ENCODE measurements at regions of chr4 and their contacts with region 1.

Region 1: DNA sequence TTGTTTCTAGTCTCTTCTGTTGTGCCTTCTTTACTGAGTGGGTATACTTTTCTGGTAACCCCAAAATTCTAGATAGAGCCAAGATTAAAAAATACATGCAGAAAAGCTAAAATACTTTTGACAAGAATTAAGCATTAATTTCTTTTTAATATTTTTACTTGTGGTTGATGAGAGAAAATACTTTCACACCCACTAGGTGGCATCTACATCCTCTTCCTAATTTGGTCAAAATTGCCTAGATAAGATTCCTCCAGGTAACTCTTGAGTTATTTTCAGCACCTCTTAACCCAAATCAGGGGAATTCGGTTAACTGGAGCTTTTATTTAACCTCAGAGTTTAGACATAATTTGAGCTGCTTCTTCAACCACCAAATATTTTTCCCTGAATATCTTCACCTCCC is 28.4 kb upstream of the COX7B2 start:
- DNase-seq: no peak
- H3K4me3 ChIP-seq: no peak overlapping the region
- H3K27ac ChIP-seq: no peak overlapping the region
- H3K27me3 ChIP-seq: no peaks in the 10 kb centered on the region
- CTCF ChIP-seq: peak; percentile 43

Region 2: DNA sequence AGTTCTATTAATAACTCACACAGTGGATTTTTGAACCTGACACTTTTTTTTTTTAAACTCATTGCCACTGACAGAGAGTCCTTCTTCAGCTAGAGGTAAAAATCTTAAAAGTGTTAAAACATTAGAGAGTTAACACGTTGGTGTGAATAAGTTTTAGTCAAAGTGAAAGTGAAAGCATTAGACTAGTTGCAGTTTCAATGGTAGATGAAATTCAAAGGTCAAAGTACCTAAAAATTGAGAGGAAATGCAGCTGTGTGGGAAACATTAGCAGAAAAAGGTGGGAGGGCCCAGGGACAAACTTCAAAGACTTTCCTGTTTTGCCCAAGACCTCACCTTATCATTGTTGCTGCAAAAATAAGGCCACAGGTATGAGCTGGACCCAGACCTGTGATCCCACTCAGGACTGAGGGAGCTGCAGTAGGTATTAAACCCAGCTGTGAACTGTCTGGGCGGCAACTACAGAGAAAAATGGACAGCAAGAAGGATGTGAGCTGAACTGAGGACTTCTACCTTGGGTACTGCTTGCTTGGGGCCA is 73.5 kb after region 1 on chr4:
- CTCF ChIA-PET with region 1: no interaction called
- POLR2A ChIA-PET with region 1: no interaction called
- DNase-seq: no peak
- H3K4me3 ChIP-seq: no peak overlapping the region
- H3K27ac ChIP-seq: no peak overlapping the region
- H3K27me3 ChIP-seq: no peaks in the 10 kb centered on the region
- CTCF ChIP-seq: no peak

Region 3: DNA sequence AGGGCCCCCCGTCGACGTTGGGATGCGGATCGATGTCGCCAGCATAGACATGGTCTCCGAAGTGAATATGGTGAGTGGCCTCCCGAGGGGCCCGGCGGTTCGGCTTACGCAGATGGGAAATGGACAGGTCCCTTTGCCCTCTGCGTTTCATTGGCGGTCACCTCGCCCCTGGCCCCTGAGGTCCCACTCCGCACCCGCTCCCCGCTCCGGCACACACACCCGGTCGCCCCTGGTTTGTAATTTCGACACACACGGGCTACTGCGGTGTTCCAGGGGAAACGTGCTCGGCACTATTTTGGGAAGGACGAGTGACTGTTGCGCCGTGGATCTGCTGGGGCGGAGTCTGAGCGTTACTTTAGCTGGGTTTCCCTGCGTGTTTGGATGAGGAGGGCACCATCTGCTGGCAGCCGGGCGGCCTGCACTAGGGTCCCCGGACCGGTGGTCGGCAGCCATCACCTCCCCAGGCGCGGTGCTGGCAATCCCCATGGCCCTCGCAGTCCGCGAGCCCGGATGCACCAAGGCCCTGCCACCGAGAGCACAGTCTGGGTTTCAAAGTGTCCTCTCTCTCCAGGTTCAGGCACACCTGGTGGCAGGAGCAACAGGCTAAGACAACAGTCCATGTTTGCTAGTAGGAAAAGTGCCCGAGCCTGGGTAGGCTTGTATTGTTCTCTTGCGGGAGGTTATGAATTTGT is 95.1 kb after region 1 on chr4:
- CTCF ChIA-PET with region 1: interaction called, 34 read pairs
- POLR2A ChIA-PET with region 1: no interaction called
- DNase-seq: peak; percentile 20
- H3K4me3 ChIP-seq: peak overlapping the region; percentile 68
- H3K27ac ChIP-seq: no peak overlapping the region
- H3K27me3 ChIP-seq: no peaks in the 10 kb centered on the region
- CTCF ChIP-seq: peak; percentile 84

Region 4: GRCh38 chr4:47213971-47214370 is 276.5 kb after region 1 on chr4:
- CTCF ChIA-PET with region 1: no interaction called
- POLR2A ChIA-PET with region 1: no interaction called
- DNase-seq: peak; percentile 66
- H3K4me3 ChIP-seq: no peak overlapping the region
- H3K27ac ChIP-seq: peak overlapping the region; percentile 80
- H3K27me3 ChIP-seq: no peaks in the 10 kb centered on the region
- CTCF ChIP-seq: no peak

Measured in AG04450 (cell line).